CD4-positive, alpha-beta T cell (primary cell): ENCODE measurements at regions of chr5 and their contacts with region 1.

Region 1: DNA sequence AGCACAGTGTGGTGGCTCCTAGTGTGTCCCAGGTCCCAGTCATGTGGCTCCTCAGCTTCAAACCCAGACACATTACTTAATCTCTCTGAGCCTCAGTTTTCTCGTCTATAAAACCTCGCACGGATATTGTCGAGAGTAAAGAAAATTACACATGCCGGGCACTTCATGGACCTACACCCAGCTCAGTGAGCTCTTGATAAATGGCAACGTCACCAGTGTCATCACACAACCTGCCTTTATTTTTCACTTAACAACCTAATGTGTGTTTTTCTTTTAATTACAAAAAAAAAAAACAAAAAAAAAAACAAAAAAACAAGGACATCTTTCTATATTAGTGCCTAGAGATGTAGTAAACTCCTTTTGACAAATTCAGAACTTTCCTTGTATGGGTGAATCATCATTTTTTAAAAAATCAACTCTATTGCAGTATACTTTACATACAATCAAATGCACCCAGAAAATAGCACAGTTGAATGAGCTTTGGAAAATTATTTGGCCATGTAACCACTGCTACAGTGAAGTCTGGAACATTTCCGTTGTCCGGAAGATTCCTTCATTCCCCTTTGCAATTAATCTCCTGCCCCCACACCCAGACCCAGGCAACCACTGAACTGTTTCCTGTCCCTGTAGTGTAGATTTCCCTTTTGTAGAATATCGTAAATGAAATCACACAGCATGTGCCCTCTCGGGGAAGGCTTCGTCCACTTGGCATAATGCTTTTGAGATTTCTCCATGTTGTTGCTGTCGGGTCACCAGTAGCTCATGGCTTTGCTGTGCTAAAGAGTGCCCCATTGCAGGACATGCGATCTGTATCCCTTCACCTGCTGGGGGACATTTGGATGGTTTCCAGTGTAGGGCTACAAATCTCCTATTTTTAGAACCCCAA is 100.4 kb upstream of the LARP1 start:
- DNase-seq: no peak
- ATAC-seq: no peak
- H3K4me3 ChIP-seq: no peak overlapping the region
- H3K4me3 Mint-ChIP-seq: no peak overlapping the region
- H3K27ac ChIP-seq: no peak overlapping the region
- H3K27ac Mint-ChIP-seq: no peak overlapping the region
- H3K4me1 ChIP-seq: peaks cover 9% of the 10 kb centered on the region
- H3K4me1 Mint-ChIP-seq: peaks cover 10% of the 10 kb centered on the region
- H3K27me3 ChIP-seq: no peaks in the 10 kb centered on the region
- H3K27me3 Mint-ChIP-seq: peaks cover 5% of the 10 kb centered on the region
- CTCF ChIP-seq: no peak

Region 2: DNA sequence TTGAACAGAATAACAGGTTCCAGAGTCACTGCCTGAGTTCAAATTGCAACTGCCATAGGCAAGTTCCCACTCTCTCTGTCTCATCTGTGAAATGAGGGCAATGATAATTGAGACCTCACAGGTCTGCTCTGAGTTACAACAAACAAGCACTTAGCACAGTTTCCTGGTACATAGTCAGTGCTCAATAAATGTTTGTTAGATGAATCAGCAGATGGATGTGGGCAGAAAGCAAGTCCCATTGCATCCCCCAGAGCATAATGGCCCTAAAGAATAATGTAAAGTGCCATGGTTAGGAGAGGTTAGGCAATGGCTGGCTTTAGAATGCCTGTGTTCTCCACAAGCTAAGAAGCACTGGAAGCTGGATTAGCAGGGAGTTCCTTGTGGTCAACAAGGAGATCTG is 36.0 kb before region 1 on chr5:
- CTCF ChIA-PET with region 1: no interaction called
- POLR2A ChIA-PET with region 1: no interaction called
- intact Hi-C with region 1: no loop called
- DNase-seq: no peak
- ATAC-seq: no peak
- H3K4me3 ChIP-seq: no peak overlapping the region
- H3K4me3 Mint-ChIP-seq: no peak overlapping the region
- H3K27ac ChIP-seq: no peak overlapping the region
- H3K27ac Mint-ChIP-seq: no peak overlapping the region
- H3K4me1 ChIP-seq: no peaks in the 10 kb centered on the region
- H3K4me1 Mint-ChIP-seq: no peaks in the 10 kb centered on the region
- H3K27me3 ChIP-seq: peaks cover 0 to 4% of the 10 kb centered on the region in 2 experiments
- H3K27me3 Mint-ChIP-seq: peaks cover 38% of the 10 kb centered on the region
- CTCF ChIP-seq: no peak

Region 3: GRCh38 chr5:154899151-154899816 is 244.6 kb after region 1 on chr5:
- CTCF ChIA-PET with region 1: interaction called, 3 read pairs
- POLR2A ChIA-PET with region 1: no interaction called
- intact Hi-C with region 1: loop called in 1 of 2 experiments (anchors 5 kb)
- DNase-seq: no peak
- ATAC-seq: no peak
- H3K4me3 ChIP-seq: no peak overlapping the region
- H3K4me3 Mint-ChIP-seq: no peak overlapping the region
- H3K27ac ChIP-seq: no peak overlapping the region
- H3K27ac Mint-ChIP-seq: no peak overlapping the region
- H3K4me1 ChIP-seq: no peaks in the 10 kb centered on the region
- H3K4me1 Mint-ChIP-seq: no peaks in the 10 kb centered on the region
- H3K27me3 ChIP-seq: no peaks in the 10 kb centered on the region
- H3K27me3 Mint-ChIP-seq: no peaks in the 10 kb centered on the region
- CTCF ChIP-seq: no peak

Region 4: DNA sequence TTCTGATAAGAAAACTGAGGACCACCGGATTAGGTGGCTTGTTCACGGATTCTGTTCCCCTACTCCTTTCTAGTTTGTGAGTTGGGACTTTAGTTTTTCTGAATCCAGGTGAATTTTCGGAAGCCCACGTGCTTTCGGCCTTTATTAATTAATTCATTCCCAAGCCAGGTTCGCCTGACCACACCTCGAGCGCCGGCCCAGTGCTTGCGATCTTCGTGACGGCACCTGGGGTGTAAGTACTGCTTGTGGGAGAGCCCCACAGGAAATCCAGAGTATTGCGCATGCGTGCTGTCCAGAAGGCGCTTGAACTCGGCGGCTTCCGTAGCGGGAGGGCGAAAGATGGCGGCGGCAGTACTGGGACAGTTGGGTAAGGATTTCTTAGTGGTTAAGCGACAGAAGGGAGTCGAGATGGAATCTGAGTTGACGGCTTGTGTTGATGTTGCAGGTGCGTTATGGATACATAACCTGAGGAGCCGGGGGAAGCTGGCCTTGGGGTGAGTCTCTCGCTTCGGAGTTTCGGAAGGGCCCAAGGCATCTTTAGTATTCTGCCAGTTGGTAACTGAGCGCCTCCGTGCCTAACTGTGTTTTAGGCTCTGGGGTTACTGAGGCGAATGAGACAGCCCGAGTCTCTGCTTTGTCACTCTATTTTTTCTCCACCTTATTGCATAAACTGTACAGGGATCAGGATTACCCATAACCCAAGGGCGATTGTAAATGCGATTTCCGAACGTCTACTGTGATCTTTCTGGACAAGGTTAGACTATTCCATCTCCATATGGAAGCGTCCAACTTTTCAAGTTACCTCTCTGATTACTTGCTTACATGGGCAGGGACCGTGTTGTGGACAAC is 286.3 kb after region 1 on chr5 and contains the start of gene MRPL22:
- CTCF ChIA-PET with region 1: no interaction called
- POLR2A ChIA-PET with region 1: interaction called, 3 read pairs
- intact Hi-C with region 1: loop called in 1 of 2 experiments (anchors 10 kb)
- DNase-seq: peak; percentile 89 to 98 (median 94)
- ATAC-seq: peak; percentile 79
- H3K4me3 ChIP-seq: peak within 1 kb of the TSS; percentile 94
- H3K4me3 Mint-ChIP-seq: peak within 1 kb of the TSS; percentile 99
- H3K27ac ChIP-seq: peak within 1 kb of the TSS; percentile 68 to 75
- H3K27ac Mint-ChIP-seq: peak within 1 kb of the TSS; percentile 97
- H3K4me1 ChIP-seq: peaks cover 44% of the 10 kb centered on the region
- H3K4me1 Mint-ChIP-seq: peaks cover 52% of the 10 kb centered on the region
- H3K27me3 ChIP-seq: no peaks in the 10 kb centered on the region
- H3K27me3 Mint-ChIP-seq: no peaks in the 10 kb centered on the region
- CTCF ChIP-seq: no peak
- total RNA-seq, gene MRPL22: 29.9 to 30.2 TPM

Region 5: DNA sequence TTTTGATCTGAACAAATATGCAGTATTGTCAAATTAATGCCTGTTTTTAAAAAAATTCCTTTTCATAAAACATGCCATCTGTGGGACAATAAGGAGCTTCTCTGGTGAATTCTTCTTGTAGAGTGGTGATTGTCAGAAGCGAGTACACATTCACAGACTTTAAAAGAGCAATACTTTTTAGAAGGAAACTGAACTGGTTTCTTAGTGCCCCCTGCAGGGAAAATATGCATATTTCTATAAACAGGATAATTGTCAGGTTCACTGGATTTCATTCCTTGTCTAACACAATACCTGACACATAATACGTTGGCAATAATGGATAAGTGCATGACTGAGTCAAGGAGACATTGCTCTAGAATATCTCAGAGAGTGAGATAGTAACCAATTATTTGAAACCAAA is 492.5 kb after region 1 on chr5:
- CTCF ChIA-PET with region 1: no interaction called
- POLR2A ChIA-PET with region 1: no interaction called
- intact Hi-C with region 1: loop called in 1 of 2 experiments (anchors 5 kb)
- DNase-seq: no peak
- ATAC-seq: no peak
- H3K4me3 ChIP-seq: no peak overlapping the region
- H3K4me3 Mint-ChIP-seq: no peak overlapping the region
- H3K27ac ChIP-seq: no peak overlapping the region
- H3K27ac Mint-ChIP-seq: no peak overlapping the region
- H3K4me1 ChIP-seq: no peaks in the 10 kb centered on the region
- H3K4me1 Mint-ChIP-seq: no peaks in the 10 kb centered on the region
- H3K27me3 ChIP-seq: peaks cover 0 to 3% of the 10 kb centered on the region in 2 experiments
- H3K27me3 Mint-ChIP-seq: peaks cover 10% of the 10 kb centered on the region
- CTCF ChIP-seq: peak; percentile 14